GM13977 (cell line): ENCODE measurements at regions of chr5 and their contacts with region 1.

Region 1: DNA sequence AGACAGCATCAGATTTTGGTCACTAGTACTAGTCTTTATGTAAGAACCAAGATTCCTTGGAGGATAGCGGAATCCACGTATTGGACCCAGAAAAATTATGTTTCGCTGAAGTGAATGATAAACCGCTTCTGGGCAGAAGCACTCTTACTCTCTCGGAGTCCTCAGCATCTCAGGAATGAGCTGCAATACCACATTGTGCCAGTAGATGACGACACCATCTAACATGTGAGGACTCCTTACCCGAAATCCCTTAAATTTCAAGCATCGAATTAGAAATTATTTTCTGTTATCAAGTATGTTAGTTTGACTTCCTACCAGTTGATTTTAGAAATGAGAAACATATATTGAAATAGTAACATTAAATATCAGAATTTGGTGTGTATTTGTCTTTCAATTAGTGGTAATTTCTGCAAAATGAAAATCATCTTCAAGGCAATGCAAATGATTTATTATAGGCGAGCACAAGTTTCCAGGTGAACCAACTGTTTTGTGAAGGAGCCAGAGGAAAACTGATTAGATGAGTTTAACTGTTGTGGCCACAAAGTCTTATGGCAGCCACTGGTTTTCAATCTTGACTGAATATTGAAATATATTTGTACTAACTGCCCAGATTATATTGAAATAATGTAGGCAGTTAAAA is 66.0 kb upstream of the CAMK4 start:
- DNase-seq: peak; percentile 45
- CTCF ChIP-seq: peak; percentile 99

Region 2: GRCh38 chr5:111280282-111280951 is 122.2 kb after region 1 on chr5:
- in situ Hi-C with region 1: loop called (anchors 10 kb)
- DNase-seq: no peak
- CTCF ChIP-seq: no peak

Region 3: DNA sequence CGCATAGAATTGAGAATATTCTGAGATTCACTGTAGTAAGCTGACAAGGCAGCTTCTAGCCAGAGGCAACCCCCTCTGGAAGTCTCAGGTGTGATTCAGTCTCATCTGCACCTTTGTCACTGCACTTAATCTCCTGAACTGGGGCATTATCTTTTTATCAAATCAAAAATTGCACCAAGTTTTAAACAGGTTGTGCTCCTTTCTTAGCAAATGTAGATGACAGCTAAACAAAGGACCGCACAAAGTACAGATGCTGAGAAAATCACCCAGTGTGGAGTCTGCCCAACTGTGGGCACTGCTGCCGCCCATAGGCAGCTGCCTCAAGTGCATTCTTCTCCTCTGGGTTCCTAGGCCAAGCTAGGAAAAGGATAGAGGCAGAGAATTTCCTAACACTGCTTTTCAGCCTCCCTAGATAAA is 303.0 kb after region 1 on chr5:
- in situ Hi-C with region 1: loop called (anchors 25 kb)
- DNase-seq: peak; percentile 14
- CTCF ChIP-seq: peak; percentile 58

Region 4: GRCh38 chr5:112146323-112147226 is 988.4 kb after region 1 on chr5:
- in situ Hi-C with region 1: loop called (anchors 25 kb)
- DNase-seq: peak; percentile 46
- CTCF ChIP-seq: peak; percentile 59